ENCODE measurements at regions of chr6 and their contacts with region 1.

Region 1: GRCh38 chr6:2103644-2104523 is 141.5 kb downstream of the GMDS start:
- DNase-seq: no peak
- H3K4me3 Mint-ChIP-seq: peak overlapping the region; percentile 54
- H3K27ac Mint-ChIP-seq: peak overlapping the region; percentile 66
- H3K4me1 Mint-ChIP-seq: peaks cover 8% of the 10 kb centered on the region
- H3K27me3 Mint-ChIP-seq: no peaks in the 10 kb centered on the region
- CTCF ChIP-seq: no peak

Region 2: DNA sequence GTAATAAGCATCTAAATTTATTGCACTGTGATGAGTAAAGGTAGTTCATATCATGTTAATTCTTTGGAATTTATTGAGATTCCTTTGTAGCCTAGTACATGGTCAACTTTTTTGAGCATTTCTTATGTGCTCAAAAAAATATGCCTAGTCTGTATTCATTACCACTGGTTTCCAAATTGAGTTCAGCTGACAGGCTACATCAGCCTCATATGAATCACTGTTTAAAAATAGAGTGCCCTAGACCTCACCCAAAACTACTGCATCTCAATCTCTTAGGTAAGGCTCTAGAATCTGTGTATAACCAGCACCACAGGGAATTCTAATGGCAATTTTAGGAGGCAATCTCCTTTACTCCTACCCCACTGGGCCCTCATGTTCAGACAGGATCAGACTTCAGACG is 731.2 kb before region 1 on chr6:
- CTCF ChIA-PET with region 1: no interaction called
- intact Hi-C with region 1: no loop called
- DNase-seq: no peak
- H3K4me3 Mint-ChIP-seq: no peak overlapping the region
- H3K27ac Mint-ChIP-seq: no peak overlapping the region
- H3K4me1 Mint-ChIP-seq: no peaks in the 10 kb centered on the region
- H3K27me3 Mint-ChIP-seq: peaks cover 80% of the 10 kb centered on the region
- CTCF ChIP-seq: no peak

Region 3: DNA sequence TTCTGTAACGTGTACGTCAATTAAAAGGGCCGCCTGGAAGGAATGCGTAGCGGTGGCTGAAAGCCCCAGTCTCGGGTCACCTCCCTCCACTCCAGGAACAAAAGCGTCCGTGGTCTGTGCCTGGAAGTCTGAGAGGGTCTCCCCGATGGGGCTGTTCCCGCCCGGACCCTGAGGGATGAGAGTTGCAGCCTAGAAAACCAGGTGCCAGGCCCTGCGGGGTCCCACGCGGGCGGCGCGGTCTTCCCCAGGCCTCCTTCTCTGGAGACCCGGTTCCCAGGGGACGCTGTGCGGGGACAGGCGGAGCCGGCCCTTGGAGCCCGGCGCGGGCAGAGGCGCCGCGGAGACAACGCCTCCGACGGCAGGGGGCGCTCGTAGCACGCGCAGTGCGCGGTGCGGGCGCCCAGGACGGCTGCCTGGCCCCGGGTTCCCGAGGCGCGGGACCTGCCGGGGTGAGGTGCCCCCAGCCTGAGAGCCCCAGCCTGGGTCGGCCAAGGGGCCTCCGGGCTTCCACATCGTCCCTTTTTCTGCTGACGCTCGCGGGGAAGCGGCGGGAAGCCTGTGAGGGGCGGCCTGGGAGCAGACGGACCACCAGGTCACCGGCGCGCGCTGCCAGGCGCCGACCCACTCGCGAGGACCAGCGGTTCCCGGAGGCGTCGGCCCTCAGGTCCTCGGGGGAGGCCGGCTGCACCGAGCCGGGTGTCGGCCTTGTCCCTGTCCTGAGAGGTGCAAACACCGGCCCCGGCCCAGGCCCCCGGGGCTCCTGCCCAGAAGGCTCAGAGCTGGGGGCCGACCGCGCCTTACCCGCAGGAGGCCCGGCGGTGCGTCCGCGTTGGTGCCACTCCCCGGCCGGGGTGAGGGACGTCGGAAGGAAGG is 499.5 kb before region 1 on chr6:
- CTCF ChIA-PET with region 1: no interaction called
- intact Hi-C with region 1: loop called (anchors 2 kb)
- DNase-seq: peak; percentile 84
- H3K4me3 Mint-ChIP-seq: peak overlapping the region; percentile 37
- H3K27ac Mint-ChIP-seq: no peak overlapping the region
- H3K4me1 Mint-ChIP-seq: peaks cover 8% of the 10 kb centered on the region
- H3K27me3 Mint-ChIP-seq: peaks cover 12% of the 10 kb centered on the region
- CTCF ChIP-seq: peak; percentile 87

Region 4: GRCh38 chr6:1767481-1768251 is 336.2 kb before region 1 on chr6:
- CTCF ChIA-PET with region 1: no interaction called
- intact Hi-C with region 1: loop called (anchors 5 kb)
- DNase-seq: peak; percentile 29
- H3K4me3 Mint-ChIP-seq: no peak overlapping the region
- H3K27ac Mint-ChIP-seq: peak overlapping the region; percentile 67
- H3K4me1 Mint-ChIP-seq: peaks cover 57% of the 10 kb centered on the region
- H3K27me3 Mint-ChIP-seq: no peaks in the 10 kb centered on the region
- CTCF ChIP-seq: no peak

Region 5: GRCh38 chr6:2353412-2354137 is 249.7 kb after region 1 on chr6:
- CTCF ChIA-PET with region 1: interaction called, 3 read pairs
- intact Hi-C with region 1: loop called (anchors 5 kb)
- DNase-seq: peak; percentile 68
- H3K4me3 Mint-ChIP-seq: no peak overlapping the region
- H3K27ac Mint-ChIP-seq: no peak overlapping the region
- H3K4me1 Mint-ChIP-seq: no peaks in the 10 kb centered on the region
- H3K27me3 Mint-ChIP-seq: no peaks in the 10 kb centered on the region
- CTCF ChIP-seq: peak; percentile 42

Measured in Calu3 (cell line).